ENCODE measurements at regions of chr16 and their contacts with region 1.

Region 1: DNA sequence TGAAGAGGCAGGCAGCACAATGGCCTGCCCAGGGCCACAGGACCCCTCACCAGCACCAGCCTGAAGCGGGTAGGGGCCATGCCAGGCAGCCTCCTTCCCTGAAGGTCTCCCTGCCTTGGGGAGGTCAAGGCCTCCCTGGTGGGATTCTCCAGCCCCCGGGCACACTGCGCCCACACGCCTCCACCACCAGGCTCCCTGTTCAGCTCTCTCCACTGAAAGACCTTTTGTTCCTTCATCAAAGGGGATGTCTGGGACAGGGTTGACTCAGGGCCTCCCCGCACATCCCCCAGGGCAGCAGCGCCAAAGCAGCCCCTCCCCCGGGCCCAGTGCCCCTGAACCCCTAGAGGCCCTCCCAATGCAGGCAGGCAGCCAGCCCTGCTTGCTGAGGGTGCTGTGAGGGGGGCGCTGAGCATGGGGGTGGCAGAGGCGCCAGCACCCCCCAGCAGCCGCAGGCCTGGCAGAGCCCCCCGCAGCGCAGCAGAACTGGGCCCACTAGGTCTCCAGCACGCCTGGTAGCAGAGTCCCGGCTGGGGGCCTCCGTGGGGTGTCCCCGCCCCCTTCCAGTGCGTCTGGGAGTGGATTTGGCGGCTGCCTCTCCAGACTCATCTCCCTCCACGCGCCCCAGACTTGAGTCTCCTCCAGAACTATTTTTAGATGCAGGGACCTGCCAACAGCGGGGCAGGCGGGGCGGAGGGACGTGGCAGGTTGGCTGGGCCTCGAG is 13.1 kb downstream of the BCAR1 start:
- DNase-seq: peak; percentile 88 to 93
- ATAC-seq: peak; percentile 81 to 82
- H3K4me3 ChIP-seq: peak overlapping the region; percentile 17 to 31 (median 25)
- H3K27ac ChIP-seq: peak overlapping the region; percentile 90 to 97 (median 93)
- H3K4me1 ChIP-seq: peaks cover 53 to 63% of the 10 kb centered on the region in 2 donors
- H3K27me3 ChIP-seq: no peaks in the 10 kb centered on the region
- CTCF ChIP-seq: no peak
- POLR2A ChIP-seq: peak in 1 of 2 donors; percentile 26

Region 2: DNA sequence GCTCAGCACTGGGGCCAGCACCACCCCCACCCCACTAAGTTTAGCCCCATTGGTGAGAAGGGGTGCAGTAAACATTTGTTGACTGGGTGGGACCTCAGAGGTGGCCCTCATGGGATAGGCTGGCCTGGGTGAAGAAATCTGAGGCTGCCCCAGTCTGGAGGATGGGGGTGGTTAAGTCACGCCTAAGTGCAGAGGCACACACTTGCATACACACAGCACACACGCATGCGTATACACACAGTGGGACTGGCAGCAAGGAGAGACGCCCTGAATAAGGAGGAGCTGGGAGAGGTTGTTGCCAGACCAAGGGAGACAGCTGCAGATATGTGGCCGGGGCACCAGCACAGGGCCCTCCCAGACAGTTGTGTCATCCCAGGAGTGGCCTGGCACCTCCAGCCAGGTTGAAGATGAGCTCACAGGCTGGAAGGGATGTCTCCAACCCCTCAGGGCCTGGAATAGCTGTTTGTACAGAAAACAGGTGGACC is 16.1 kb after region 1 on chr16:
- in situ Hi-C with region 1: no loop called
- intact Hi-C with region 1: loop called (anchors 1 kb)
- DNase-seq: peak; percentile 89 to 97
- ATAC-seq: peak; percentile 60 to 63
- H3K4me3 ChIP-seq: peak overlapping the region in 1 of 4 donors; percentile 15
- H3K27ac ChIP-seq: peak overlapping the region; percentile 97 to 99 (median 98)
- H3K4me1 ChIP-seq: peaks cover 87% of the 10 kb centered on the region in 2 donors
- H3K27me3 ChIP-seq: no peaks in the 10 kb centered on the region
- CTCF ChIP-seq: no peak
- POLR2A ChIP-seq: peak in 1 of 2 donors; percentile 43

Region 3: GRCh38 chr16:75265845-75266701 is 27.8 kb after region 1 on chr16:
- in situ Hi-C with region 1: no loop called
- intact Hi-C with region 1: loop called (anchors 2 kb)
- DNase-seq: peak; percentile 70 to 86
- ATAC-seq: peak; percentile 37 to 51
- H3K4me3 ChIP-seq: peak overlapping the region; percentile 75 to 97 (median 90)
- H3K27ac ChIP-seq: peak overlapping the region; percentile 95 to 100 (median 98)
- H3K4me1 ChIP-seq: peaks cover 56 to 62% of the 10 kb centered on the region in 2 donors
- H3K27me3 ChIP-seq: no peaks in the 10 kb centered on the region
- CTCF ChIP-seq: no peak
- POLR2A ChIP-seq: peak; percentile 97 to 98

Region 4: GRCh38 chr16:75305364-75306098 is 67.2 kb after region 1 on chr16:
- in situ Hi-C with region 1: no loop called
- intact Hi-C with region 1: loop called (anchors 1 kb)
- DNase-seq: peak; percentile 87 to 95
- ATAC-seq: peak; percentile 97 to 98
- H3K4me3 ChIP-seq: peak overlapping the region in 3 of 4 donors; percentile 4 to 21 (median 12)
- H3K27ac ChIP-seq: peak overlapping the region; percentile 86 to 91 (median 90)
- H3K4me1 ChIP-seq: peaks cover 26 to 27% of the 10 kb centered on the region in 2 donors
- H3K27me3 ChIP-seq: no peaks in the 10 kb centered on the region
- CTCF ChIP-seq: no peak
- POLR2A ChIP-seq: peak; percentile 61 to 73

Region 5: DNA sequence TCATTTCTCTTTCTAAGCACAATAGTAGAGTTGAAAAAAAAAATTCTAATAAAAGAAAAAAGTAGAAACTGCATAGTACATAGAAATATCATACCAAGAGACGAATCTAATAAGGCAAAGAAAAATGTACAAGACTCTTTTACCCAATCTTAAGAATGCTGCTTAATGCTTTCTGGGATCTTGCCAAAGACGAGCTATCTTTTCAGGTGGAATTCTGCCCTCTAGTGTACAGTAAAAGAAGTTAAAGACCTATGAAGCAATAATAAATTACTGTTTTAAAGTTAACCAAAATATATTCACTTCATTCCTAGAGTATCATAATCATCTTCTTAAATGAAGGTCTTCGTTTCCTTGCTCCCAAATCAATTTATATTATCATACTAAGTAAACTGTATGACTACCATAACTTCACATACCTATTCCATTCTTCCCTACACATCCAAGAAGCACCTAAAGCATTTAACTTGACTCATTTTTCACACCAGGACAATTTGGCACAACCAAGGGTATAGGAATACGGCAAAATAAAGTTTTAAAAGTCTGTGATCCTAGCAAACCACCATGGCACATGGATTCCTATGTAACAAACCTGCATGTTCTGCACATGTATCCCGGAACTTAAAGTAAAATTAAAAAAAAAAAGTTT is 147.3 kb after region 1 on chr16:
- in situ Hi-C with region 1: no loop called
- intact Hi-C with region 1: loop called (anchors 1 kb)
- DNase-seq: no peak
- ATAC-seq: peak; percentile 60 to 64
- H3K4me3 ChIP-seq: no peak overlapping the region
- H3K27ac ChIP-seq: peak overlapping the region in 1 of 4 donors; percentile 11
- H3K4me1 ChIP-seq: peaks cover 3 to 4% of the 10 kb centered on the region in 2 donors
- H3K27me3 ChIP-seq: no peaks in the 10 kb centered on the region
- CTCF ChIP-seq: peak; percentile 73 to 94 (median 77)
- POLR2A ChIP-seq: no peak

Measured in gastrocnemius medialis (tissue), 4 donors.